CD8-positive, alpha-beta T cell (primary cell): ENCODE measurements at regions of chr16 and their contacts with region 1.

Region 1: GRCh38 chr16:89945670-89946069 is 2.9 kb upstream of the DEF8 start:
- DNase-seq: no peak
- ATAC-seq: no peak
- H3K4me3 ChIP-seq: no peak overlapping the region
- H3K4me3 Mint-ChIP-seq: no peak overlapping the region
- H3K27ac ChIP-seq: no peak overlapping the region
- H3K27ac Mint-ChIP-seq: no peak overlapping the region
- H3K4me1 ChIP-seq: peaks cover 14% of the 10 kb centered on the region
- H3K4me1 Mint-ChIP-seq: peaks cover 9% of the 10 kb centered on the region
- H3K27me3 ChIP-seq: peaks cover 0 to 7% of the 10 kb centered on the region in 2 experiments
- H3K27me3 Mint-ChIP-seq: peaks cover 25% of the 10 kb centered on the region
- CTCF ChIP-seq: no peak

Region 2: DNA sequence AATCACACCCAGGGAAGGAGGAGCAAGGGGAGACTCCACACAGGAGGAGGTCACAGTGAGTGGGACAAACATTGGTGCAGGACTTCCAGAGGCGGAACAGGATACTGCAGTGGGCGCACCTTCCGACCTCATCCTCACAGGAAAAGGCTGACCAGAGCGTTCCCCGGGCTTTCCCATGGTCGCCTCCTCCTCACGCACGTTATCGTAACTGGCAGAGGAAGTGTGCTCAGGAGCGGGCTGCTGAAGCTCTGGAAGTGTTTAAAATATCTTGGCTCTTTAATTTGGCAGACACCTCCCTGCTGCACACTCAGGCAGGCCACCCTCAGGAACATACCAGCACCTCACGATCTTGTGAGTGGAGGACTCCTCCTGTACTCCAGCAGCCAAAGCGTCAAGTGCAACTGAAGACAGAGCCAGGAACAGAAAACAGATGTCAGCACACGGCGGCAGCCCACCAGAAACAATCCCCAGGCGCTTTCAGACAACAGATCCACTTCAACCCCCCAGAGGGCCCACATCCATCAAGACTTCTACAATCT is 146.8 kb before region 1 on chr16:
- CTCF ChIA-PET with region 1: no interaction called
- POLR2A ChIA-PET with region 1: no interaction called
- intact Hi-C with region 1: no loop called
- DNase-seq: no peak
- ATAC-seq: no peak
- H3K4me3 ChIP-seq: no peak overlapping the region
- H3K4me3 Mint-ChIP-seq: no peak overlapping the region
- H3K27ac ChIP-seq: no peak overlapping the region
- H3K27ac Mint-ChIP-seq: no peak overlapping the region
- H3K4me1 ChIP-seq: no peaks in the 10 kb centered on the region
- H3K4me1 Mint-ChIP-seq: no peaks in the 10 kb centered on the region
- H3K27me3 ChIP-seq: no peaks in the 10 kb centered on the region
- H3K27me3 Mint-ChIP-seq: no peaks in the 10 kb centered on the region
- CTCF ChIP-seq: no peak

Region 3: DNA sequence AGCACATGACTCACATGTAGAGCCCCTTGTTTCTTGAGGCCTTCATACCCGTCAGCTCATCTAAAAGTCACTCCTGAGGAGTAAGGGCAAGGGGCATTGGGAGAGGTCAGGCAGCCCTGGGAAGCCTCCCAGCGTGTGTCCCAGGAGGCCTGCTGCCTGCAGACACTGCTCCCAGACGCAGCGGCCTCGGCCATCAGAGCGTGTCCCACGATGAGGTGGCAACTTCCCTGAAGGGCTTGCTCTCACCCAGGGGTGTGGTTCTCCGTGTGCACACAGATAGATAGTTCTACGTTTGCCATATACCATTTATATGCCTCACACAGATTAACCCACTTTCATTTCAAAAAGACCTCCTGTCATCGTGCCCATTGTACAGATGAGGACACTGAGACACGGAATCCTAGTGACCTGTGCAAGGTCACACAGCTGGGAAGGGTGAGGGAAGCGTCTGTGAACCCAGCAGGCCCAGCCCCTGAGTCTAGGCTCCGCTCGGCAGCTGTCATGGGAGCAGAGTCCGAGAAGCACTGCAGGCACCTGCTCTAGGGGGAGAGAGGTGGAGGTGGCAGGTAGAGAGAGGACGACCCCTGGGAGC is 14.3 kb before region 1 on chr16:
- CTCF ChIA-PET with region 1: no interaction called
- POLR2A ChIA-PET with region 1: no interaction called
- intact Hi-C with region 1: no loop called
- DNase-seq: no peak
- ATAC-seq: no peak
- H3K4me3 ChIP-seq: no peak overlapping the region
- H3K4me3 Mint-ChIP-seq: no peak overlapping the region
- H3K27ac ChIP-seq: no peak overlapping the region
- H3K27ac Mint-ChIP-seq: no peak overlapping the region
- H3K4me1 ChIP-seq: no peaks in the 10 kb centered on the region
- H3K4me1 Mint-ChIP-seq: no peaks in the 10 kb centered on the region
- H3K27me3 ChIP-seq: peaks cover 8 to 20% of the 10 kb centered on the region in 2 experiments
- H3K27me3 Mint-ChIP-seq: peaks cover 15% of the 10 kb centered on the region
- CTCF ChIP-seq: no peak

Region 4: GRCh38 chr16:89958068-89958467 is 12.4 kb after region 1 on chr16:
- CTCF ChIA-PET with region 1: no interaction called
- POLR2A ChIA-PET with region 1: no interaction called
- intact Hi-C with region 1: no loop called
- DNase-seq: peak in 1 of 9 experiments; percentile 18
- ATAC-seq: peak; percentile 42
- H3K4me3 ChIP-seq: no peak overlapping the region
- H3K4me3 Mint-ChIP-seq: no peak overlapping the region
- H3K27ac ChIP-seq: no peak overlapping the region
- H3K27ac Mint-ChIP-seq: no peak overlapping the region
- H3K4me1 ChIP-seq: no peaks in the 10 kb centered on the region
- H3K4me1 Mint-ChIP-seq: no peaks in the 10 kb centered on the region
- H3K27me3 ChIP-seq: no peaks in the 10 kb centered on the region
- H3K27me3 Mint-ChIP-seq: no peaks in the 10 kb centered on the region
- CTCF ChIP-seq: no peak

Region 5: GRCh38 chr16:89999831-90000574 is 54.3 kb after region 1 on chr16:
- CTCF ChIA-PET with region 1: no interaction called
- POLR2A ChIA-PET with region 1: no interaction called
- intact Hi-C with region 1: no loop called
- DNase-seq: no peak
- ATAC-seq: no peak
- H3K4me3 ChIP-seq: no peak overlapping the region
- H3K4me3 Mint-ChIP-seq: no peak overlapping the region
- H3K27ac ChIP-seq: no peak overlapping the region
- H3K27ac Mint-ChIP-seq: no peak overlapping the region
- H3K4me1 ChIP-seq: no peaks in the 10 kb centered on the region
- H3K4me1 Mint-ChIP-seq: no peaks in the 10 kb centered on the region
- H3K27me3 ChIP-seq: no peaks in the 10 kb centered on the region
- H3K27me3 Mint-ChIP-seq: no peaks in the 10 kb centered on the region
- CTCF ChIP-seq: no peak

Region 6: DNA sequence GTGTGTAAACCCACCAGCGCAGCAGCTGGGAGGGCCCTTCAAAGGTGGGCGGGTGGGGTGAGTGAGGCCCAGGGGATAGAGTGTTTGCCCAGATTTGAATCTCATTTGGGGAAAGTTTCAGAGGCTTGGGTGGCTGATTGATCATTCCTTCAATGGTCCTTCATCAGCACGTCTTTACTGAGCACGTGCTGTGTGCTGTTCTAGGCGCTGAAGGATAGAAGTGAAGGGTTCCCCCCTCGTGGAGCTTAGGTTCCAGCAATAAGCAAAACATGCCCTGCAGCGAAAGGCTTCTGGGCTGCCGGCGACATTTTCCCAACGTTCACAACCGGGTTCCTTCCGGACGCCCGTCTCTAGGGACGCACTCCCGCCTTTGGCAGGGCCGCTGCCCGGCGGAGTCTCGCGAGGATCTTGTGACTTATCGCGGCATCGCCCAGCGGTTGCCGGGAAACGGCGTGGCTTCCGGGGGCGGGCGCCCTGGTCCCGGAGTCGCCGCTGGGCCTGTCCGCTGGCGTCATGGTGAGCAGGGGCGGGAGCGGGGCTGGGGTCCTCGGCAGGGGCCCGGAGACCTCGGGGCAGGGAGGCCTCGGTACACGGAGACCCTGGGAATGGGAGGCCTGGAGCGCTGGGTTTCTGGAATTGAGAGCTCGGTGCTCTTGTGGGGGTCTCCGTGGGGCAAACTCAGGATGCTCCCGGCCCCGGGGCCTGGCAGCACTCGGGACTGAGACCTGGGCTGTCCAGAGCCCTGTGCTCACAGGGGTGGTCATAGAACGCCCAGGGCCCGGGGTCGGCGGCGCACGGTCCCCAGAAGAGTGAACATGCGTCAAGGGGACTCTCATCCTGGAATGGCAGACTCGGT is 76.8 kb after region 1 on chr16:
- CTCF ChIA-PET with region 1: no interaction called
- POLR2A ChIA-PET with region 1: no interaction called
- intact Hi-C with region 1: loop called in 1 of 2 experiments (anchors 5 kb)
- DNase-seq: peak; percentile 43 to 84 (median 71)
- ATAC-seq: peak; percentile 67
- H3K4me3 ChIP-seq: peak overlapping the region; percentile 45 to 63
- H3K4me3 Mint-ChIP-seq: peak overlapping the region; percentile 74
- H3K27ac ChIP-seq: no peak overlapping the region
- H3K27ac Mint-ChIP-seq: no peak overlapping the region
- H3K4me1 ChIP-seq: peaks cover 31% of the 10 kb centered on the region
- H3K4me1 Mint-ChIP-seq: peaks cover 26% of the 10 kb centered on the region
- H3K27me3 ChIP-seq: no peaks in the 10 kb centered on the region
- H3K27me3 Mint-ChIP-seq: no peaks in the 10 kb centered on the region
- CTCF ChIP-seq: no peak